OCI-LY7 (cell line): ENCODE measurements at regions of chr7 and their contacts with region 1.

Region 1: GRCh38 chr7:12729112-12729511 is 41.7 kb downstream of the ARL4A start:
- DNase-seq: no peak
- H3K4me3 ChIP-seq: no peak overlapping the region
- H3K27ac ChIP-seq: no peak overlapping the region
- H3K4me1 ChIP-seq: no peaks in the 10 kb centered on the region
- CTCF ChIP-seq: no peak

Region 2: GRCh38 chr7:12911053-12911452 is 181.9 kb after region 1 on chr7:
- CTCF ChIA-PET with region 1: no interaction called
- POLR2A ChIA-PET with region 1: no interaction called
- intact Hi-C with region 1: loop called (anchors 10 kb)
- DNase-seq: no peak
- H3K4me3 ChIP-seq: no peak overlapping the region
- H3K27ac ChIP-seq: no peak overlapping the region
- H3K4me1 ChIP-seq: no peaks in the 10 kb centered on the region
- CTCF ChIP-seq: no peak

Region 3: DNA sequence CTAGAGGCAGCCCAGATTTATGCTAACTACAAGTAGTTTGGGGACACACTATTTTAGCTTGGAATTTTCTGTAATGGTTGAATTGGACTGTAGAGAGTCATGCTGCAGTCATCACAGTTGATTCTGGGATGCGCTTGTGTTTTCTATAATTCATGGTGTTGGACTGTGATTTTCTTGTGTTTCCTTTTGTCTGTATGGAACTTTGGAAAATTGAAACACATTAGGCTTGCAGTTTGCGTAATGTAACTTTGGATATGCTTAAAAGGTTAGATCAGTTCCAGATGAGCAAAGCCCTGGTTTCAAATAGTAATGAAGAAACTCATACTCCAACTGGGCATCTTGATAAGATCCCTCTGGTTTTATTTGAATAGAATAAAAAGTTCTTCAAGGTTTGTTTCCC is 460.6 kb after region 1 on chr7:
- CTCF ChIA-PET with region 1: no interaction called
- POLR2A ChIA-PET with region 1: no interaction called
- intact Hi-C with region 1: no loop called
- DNase-seq: no peak
- H3K4me3 ChIP-seq: no peak overlapping the region
- H3K27ac ChIP-seq: no peak overlapping the region
- H3K4me1 ChIP-seq: no peaks in the 10 kb centered on the region
- CTCF ChIP-seq: no peak